ENCODE measurements at regions of chr7 and their contacts with region 1.

Region 1: DNA sequence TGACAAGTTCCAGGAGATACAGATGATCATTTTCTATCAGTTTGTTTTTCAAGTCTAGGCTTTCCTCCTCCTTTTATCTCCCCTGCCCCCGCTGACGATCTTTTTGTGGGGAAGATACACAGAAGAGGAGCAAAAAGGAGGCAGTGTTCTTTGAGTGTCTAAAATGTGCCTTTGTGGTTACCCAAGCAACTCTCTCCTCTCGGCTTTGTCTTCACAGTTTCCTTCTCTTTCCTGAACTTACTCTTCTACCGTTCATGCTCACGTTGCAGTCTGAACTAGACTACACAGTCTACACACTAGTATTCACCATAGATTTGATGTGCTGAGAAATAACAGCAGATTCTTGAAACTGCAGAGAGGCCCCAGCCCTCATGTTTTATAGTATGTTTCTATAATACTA is 23.6 kb downstream of the CEP41 start:
- DNase-seq: no peak
- H3K4me3 Mint-ChIP-seq: peak overlapping the region; percentile 1
- H3K27ac Mint-ChIP-seq: peak overlapping the region; percentile 24
- H3K4me1 Mint-ChIP-seq: peaks cover 52% of the 10 kb centered on the region
- H3K27me3 Mint-ChIP-seq: no peaks in the 10 kb centered on the region

Region 2: DNA sequence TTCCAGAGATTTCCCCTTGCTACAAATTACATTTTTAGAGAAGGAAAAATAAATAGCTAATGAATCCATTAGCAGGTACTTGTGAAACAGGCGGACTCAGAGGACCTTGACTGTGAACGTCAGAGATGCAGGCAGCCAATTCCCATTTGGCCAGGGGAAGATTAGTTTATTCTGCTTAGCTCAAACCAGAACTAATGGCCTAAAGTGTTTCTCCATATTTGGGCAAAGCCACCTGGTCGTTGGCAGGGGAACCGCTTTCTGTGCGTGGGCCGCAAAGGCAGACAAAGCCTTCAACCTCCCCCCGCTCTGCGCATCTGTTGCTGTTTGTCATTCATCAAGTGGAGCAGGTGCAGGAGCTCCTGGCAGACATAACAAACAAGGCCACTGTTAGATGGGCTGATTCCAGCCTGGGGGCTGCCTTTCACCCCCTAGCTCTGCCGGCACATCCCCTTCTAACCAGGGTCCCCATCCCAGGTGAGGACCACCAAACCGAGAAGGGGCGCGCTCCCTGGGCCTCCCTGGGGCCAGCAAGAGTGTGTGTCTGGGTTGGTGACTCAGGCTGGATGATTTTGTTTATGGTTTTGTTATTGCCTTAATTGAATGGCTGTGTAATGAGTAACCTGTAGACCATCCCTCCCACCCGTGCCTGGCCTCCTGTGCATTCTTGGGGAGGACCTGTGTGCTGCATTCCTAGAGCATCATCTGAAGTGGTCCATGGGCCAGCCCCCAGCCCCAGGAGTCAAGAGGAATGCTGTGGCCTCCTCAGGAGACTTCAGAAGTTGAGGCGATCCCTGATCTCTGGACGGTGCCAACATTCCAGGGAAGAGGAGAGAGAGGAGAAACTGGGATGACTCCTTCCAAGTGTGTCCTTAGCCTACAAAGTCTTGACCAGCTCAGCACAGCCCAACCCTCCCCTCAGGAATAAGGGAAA is 51.4 kb before region 1 on chr7:
- intact Hi-C with region 1: loop called (anchors 1 kb)
- DNase-seq: no peak
- H3K4me3 Mint-ChIP-seq: no peak overlapping the region
- H3K27ac Mint-ChIP-seq: no peak overlapping the region
- H3K4me1 Mint-ChIP-seq: peaks cover 33% of the 10 kb centered on the region
- H3K27me3 Mint-ChIP-seq: no peaks in the 10 kb centered on the region

Region 3: GRCh38 chr7:130377178-130377577 is 40.0 kb before region 1 on chr7:
- intact Hi-C with region 1: no loop called
- DNase-seq: no peak
- H3K4me3 Mint-ChIP-seq: no peak overlapping the region
- H3K27ac Mint-ChIP-seq: no peak overlapping the region
- H3K4me1 Mint-ChIP-seq: no peaks in the 10 kb centered on the region
- H3K27me3 Mint-ChIP-seq: no peaks in the 10 kb centered on the region

Region 4: DNA sequence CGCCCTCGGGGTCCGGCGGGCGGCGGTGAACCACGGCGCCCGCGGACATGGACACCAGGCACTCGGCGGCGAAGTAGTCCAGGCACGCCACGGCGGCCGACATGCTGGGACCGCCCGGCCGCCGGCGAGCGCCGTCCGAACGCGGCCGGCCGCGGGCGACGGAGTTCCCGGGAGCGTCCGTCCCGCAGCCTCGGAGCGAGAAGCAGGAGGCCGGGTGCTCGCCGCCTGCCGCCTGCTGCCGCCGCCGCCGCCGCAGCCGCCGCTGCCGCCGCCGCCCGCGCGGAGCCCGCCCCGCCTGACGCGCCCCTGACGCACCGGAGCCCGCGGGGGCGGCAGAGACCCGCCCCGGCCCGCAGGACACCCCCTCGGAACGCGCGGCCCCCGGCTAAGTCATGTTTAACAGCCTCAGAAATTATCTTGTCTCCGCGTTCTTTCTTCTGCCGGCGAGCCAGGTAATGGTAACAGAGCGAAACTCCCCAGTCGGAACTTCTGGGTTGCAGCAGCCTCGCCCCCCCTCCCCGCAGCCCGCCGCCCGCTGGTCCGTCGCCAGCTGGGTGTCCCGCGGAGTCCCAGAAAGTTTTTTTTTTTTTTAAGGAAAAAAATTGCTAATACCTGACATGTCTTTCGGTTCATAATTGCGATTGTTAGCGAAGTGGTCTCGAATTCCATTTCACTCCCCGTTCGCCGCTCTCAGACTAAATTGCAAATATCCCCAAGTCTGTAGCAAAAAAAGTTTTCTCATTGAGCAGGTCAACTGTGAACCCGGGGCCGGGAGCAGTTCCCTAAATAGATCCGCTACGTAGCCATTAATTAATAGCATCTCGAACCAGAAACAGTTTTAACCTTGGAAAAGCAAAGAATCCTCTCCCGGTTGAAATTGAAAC is 317.0 kb after region 1 on chr7 and contains the start of gene KLF14:
- intact Hi-C with region 1: no loop called
- DNase-seq: peak; percentile 12
- H3K4me3 Mint-ChIP-seq: peak within 1 kb of the TSS; percentile 83
- H3K27ac Mint-ChIP-seq: no peak within 1 kb of the TSS
- H3K4me1 Mint-ChIP-seq: peaks cover 8% of the 10 kb centered on the region
- H3K27me3 Mint-ChIP-seq: peaks cover 69% of the 10 kb centered on the region
- total RNA-seq, gene KLF14: not detected in 2 replicates